GM13977 (cell line): ENCODE measurements at regions of chr1 and their contacts with region 1.

Region 1: GRCh38 chr1:6245086-6245868 is 1.3 kb downstream of the HES3 start:
- DNase-seq: peak; percentile 95
- CTCF ChIP-seq: peak; percentile 94

Region 2: DNA sequence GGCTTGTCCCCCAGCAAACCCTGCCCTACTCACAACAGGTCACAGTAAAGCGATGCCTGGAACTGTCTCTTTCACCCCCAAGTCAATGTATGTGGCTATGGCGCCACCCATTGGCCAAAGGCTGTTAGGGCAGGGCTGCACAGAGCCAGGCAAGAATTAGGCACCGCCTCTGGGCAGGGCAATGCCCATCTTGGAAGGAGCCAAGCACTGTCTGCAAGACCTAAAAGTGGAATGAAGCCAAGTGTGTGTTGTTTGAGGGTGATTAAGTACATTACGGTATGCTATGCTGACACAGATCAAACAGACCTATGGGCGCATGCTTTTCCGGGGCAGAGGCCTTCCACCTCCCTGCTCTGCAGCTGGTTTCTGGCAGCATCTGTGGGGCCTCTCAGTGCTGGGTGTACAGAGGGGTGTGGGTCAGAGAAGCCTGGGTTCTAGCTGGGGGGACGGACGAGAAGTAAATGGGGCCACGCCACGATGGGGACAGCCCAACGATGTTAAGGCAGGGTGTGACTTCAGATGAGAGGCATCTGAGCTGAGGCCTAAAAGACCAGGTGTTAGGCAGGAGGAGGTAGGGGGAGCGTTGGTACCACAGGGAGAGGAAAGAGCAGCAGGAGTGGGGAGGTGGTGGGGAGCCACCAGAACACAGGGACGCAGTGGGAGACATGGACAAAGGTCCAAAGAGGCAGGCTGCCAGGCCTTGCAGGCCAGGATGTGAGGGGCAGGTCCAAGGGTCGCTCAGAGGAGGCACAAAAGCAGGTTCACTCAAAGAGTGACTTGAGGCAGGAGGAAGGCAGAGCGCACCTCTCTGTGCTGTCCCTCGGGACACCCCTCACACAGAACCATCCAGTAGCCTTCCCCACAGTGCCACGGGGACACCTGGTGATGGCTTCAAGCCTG is 98.5 kb after region 1 on chr1:
- in situ Hi-C with region 1: loop called (anchors 10 kb)
- DNase-seq: peak; percentile 81
- CTCF ChIP-seq: peak; percentile 97

Region 3: GRCh38 chr1:6401673-6402072 is 156.4 kb after region 1 on chr1:
- in situ Hi-C with region 1: loop called (anchors 10 kb)
- DNase-seq: no peak
- CTCF ChIP-seq: no peak